MCF 10A (cell line): ENCODE measurements at regions of chr12 and their contacts with region 1.

Region 1: DNA sequence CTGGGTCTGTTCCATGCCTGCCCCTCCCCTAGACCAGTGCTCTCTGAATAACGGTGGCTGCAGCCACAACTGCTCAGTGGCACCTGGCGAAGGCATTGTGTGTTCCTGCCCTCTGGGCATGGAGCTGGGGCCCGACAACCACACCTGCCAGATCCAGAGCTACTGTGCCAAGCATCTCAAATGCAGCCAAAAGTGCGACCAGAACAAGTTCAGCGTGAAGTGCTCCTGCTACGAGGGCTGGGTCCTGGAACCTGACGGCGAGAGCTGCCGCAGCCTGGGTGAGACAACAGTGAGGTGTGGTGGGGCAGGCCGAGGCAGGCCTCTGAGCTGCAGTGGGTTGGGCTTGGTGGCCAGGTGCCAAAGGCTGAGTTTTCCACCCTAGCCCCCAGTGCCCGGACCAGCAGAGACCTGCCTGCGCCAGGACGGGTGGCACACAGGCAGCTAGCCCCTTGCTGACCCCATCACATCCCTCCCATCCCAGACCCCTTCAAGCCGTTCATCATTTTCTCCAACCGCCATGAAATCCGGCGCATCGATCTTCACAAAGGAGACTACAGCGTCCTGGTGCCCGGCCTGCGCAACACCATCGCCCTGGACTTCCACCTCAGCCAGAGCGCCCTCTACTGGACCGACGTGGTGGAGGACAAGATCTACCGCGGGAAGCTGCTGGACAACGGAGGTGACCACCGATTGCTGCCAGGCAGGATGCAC is 28.2 kb upstream of the LRP1-AS start:
- DNase-seq: peak; percentile 94
- H3K4me3 Mint-ChIP-seq: peak overlapping the region; percentile 32
- H3K27ac Mint-ChIP-seq: peak overlapping the region; percentile 68
- H3K4me1 Mint-ChIP-seq: peaks cover 41% of the 10 kb centered on the region
- H3K27me3 Mint-ChIP-seq: no peaks in the 10 kb centered on the region
- CTCF ChIP-seq: peak; percentile 91

Region 2: GRCh38 chr12:57078519-57079404 is 96.8 kb before region 1 on chr12 and contains the start of gene NEMP1:
- CTCF ChIA-PET with region 1: interaction called, 7 read pairs
- POLR2A ChIA-PET with region 1: interaction called, 19 read pairs
- intact Hi-C with region 1: no loop called
- DNase-seq: peak; percentile 100
- H3K4me3 Mint-ChIP-seq: peak within 1 kb of the TSS; percentile 100
- H3K27ac Mint-ChIP-seq: peak within 1 kb of the TSS; percentile 97
- H3K4me1 Mint-ChIP-seq: no peaks in the 10 kb centered on the region
- H3K27me3 Mint-ChIP-seq: no peaks in the 10 kb centered on the region
- CTCF ChIP-seq: no peak
- total RNA-seq, gene NEMP1: 17.5 and 22.5 TPM in 2 replicates

Region 3: GRCh38 chr12:57088459-57089248 is 86.9 kb before region 1 on chr12 and contains the start of gene NAB2:
- CTCF ChIA-PET with region 1: interaction called, 10 read pairs
- POLR2A ChIA-PET with region 1: interaction called, 39 read pairs
- intact Hi-C with region 1: no loop called
- DNase-seq: peak; percentile 96
- H3K4me3 Mint-ChIP-seq: peak within 1 kb of the TSS; percentile 90
- H3K27ac Mint-ChIP-seq: peak within 1 kb of the TSS; percentile 94
- H3K4me1 Mint-ChIP-seq: peaks cover 36% of the 10 kb centered on the region
- H3K27me3 Mint-ChIP-seq: no peaks in the 10 kb centered on the region
- CTCF ChIP-seq: no peak
- total RNA-seq, gene NAB2: 25.8 and 30.6 TPM in 2 replicates

Region 4: DNA sequence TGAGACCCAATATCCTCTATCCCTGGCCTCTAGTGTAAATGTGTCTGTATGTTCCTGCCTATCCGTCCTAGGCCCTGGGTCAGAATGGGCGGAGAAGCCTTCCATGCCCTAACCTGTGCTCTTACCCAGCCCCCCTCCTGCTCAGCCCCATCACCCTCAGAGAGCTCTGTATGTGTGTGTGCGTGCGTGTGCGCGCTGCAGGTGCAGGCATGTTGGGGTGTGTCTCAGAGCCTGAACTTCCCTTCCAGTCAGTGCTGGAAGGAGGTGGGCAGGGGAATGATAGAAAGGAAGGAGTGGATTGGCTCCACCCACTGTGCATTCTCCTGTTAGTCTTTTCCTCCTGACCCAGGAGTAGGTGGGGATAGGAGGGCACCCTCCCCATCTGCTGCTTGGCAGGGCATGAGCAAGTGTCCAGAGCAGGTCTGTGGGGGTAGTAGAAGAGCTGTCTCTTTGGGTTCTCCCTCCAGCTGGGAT is 79.4 kb before region 1 on chr12:
- CTCF ChIA-PET with region 1: interaction called, 12 read pairs
- POLR2A ChIA-PET with region 1: interaction called, 6 read pairs
- intact Hi-C with region 1: no loop called
- DNase-seq: peak; percentile 95
- H3K4me3 Mint-ChIP-seq: no peak overlapping the region
- H3K27ac Mint-ChIP-seq: peak overlapping the region; percentile 78
- H3K4me1 Mint-ChIP-seq: peaks cover 51% of the 10 kb centered on the region
- H3K27me3 Mint-ChIP-seq: no peaks in the 10 kb centered on the region
- CTCF ChIP-seq: no peak

Region 5: GRCh38 chr12:57151741-57152630 is 23.6 kb before region 1 on chr12:
- CTCF ChIA-PET with region 1: interaction called, 54 read pairs
- POLR2A ChIA-PET with region 1: interaction called, 32 read pairs
- intact Hi-C with region 1: no loop called
- DNase-seq: peak; percentile 89
- H3K4me3 Mint-ChIP-seq: peak overlapping the region; percentile 29
- H3K27ac Mint-ChIP-seq: peak overlapping the region; percentile 70
- H3K4me1 Mint-ChIP-seq: peaks cover 57% of the 10 kb centered on the region
- H3K27me3 Mint-ChIP-seq: no peaks in the 10 kb centered on the region
- CTCF ChIP-seq: no peak